GM10248 (cell line): ENCODE measurements at regions of chr15 and their contacts with region 1.

Region 1: DNA sequence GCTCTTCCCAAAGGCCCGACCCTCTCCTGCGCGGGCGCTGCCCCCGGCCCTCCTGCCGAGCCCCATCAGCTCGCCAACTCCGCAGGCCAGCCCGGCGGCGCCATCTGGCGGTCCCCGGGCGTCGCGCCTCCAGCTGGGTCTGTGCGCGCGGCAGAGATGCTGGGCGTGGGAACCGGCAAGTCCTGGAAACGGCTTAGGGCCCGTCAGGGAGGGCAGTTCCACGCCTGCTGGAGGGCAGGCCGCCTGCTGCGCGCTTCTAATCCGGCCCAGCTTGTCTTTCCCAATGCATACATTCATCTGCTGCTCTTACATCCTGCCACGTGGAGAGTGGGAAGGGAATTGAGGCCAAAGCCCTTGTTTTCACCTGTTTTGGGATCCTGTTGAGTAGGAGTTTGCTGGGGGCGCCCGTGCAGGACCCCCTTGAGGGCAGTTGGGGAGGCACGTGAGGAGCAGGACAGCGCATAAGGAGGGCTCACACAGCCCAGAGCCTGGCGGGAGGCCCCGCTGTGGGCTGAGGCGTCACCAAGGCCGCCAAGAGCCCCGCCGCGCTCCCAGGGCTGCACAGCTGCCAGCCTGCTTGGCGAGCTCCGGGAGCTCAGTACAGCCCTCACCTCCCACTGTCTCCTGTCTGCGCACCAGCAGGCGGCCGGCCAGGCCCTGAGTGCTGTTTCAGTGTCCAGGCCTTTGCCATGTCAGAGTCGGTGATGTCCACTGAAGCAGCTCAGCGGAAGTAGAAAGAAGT is 165.6 kb downstream of the NSMCE3 start:
- DNase-seq: peak; percentile 80
- CTCF ChIP-seq: peak; percentile 88

Region 2: GRCh38 chr15:29003191-29003839 is 100.7 kb before region 1 on chr15:
- CTCF ChIA-PET with region 1: no interaction called
- POLR2A ChIA-PET with region 1: no interaction called
- DNase-seq: no peak
- CTCF ChIP-seq: no peak

Region 3: DNA sequence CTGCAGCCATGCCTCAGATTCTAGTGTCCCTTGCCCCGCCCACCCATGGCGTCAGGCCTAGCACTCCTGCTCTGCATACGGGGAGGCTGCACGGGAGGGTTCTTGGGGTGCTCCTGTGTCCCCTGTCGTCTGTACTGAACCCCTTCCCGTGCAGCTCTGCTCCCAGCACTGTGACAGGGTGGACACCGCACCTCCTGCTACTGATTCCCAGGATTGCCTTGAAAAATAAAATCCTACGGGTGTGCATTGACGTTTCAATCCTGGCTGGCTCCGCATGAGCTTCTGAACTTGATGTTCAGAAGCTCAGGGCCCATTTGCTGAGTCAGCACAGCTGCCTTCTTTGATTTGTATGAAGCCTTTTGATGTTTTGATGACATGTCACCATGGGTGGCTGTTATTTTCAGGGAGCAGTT is 41.8 kb before region 1 on chr15:
- CTCF ChIA-PET with region 1: no interaction called
- POLR2A ChIA-PET with region 1: no interaction called
- DNase-seq: no peak
- CTCF ChIP-seq: no peak

Region 4: GRCh38 chr15:29081781-29082180 is 22.2 kb before region 1 on chr15:
- CTCF ChIA-PET with region 1: interaction called, 72 read pairs
- POLR2A ChIA-PET with region 1: no interaction called
- DNase-seq: no peak
- CTCF ChIP-seq: no peak

Region 5: GRCh38 chr15:29090617-29091466 is 13.2 kb before region 1 on chr15:
- CTCF ChIA-PET with region 1: interaction called, 72 read pairs
- POLR2A ChIA-PET with region 1: no interaction called
- DNase-seq: no peak
- CTCF ChIP-seq: peak; percentile 61